B cell (primary cell): ENCODE measurements at regions of chr12 and their contacts with region 1.

Region 1: GRCh38 chr12:89701606-89702206 is 6.9 kb downstream of the ATP2B1 start:
- DNase-seq: no peak
- ATAC-seq: no peak
- H3K4me3 ChIP-seq: no peak overlapping the region
- H3K4me3 Mint-ChIP-seq: peak overlapping the region; percentile 42
- H3K27ac ChIP-seq: no peak overlapping the region
- H3K27ac Mint-ChIP-seq: no peak overlapping the region
- H3K4me1 ChIP-seq: peaks cover 37 to 81% of the 10 kb centered on the region in 2 donors
- H3K4me1 Mint-ChIP-seq: peaks cover 91% of the 10 kb centered on the region
- H3K27me3 ChIP-seq: no peaks in the 10 kb centered on the region
- H3K27me3 Mint-ChIP-seq: no peaks in the 10 kb centered on the region
- CTCF ChIP-seq: no peak

Region 2: GRCh38 chr12:89514751-89515150 is 187.0 kb before region 1 on chr12:
- CTCF ChIA-PET with region 1: no interaction called
- POLR2A ChIA-PET with region 1: no interaction called
- intact Hi-C with region 1: no loop called
- DNase-seq: no peak
- ATAC-seq: no peak
- H3K4me3 ChIP-seq: no peak overlapping the region
- H3K4me3 Mint-ChIP-seq: no peak overlapping the region
- H3K27ac ChIP-seq: no peak overlapping the region
- H3K27ac Mint-ChIP-seq: no peak overlapping the region
- H3K4me1 ChIP-seq: peaks cover 12 to 15% of the 10 kb centered on the region in 2 donors
- H3K4me1 Mint-ChIP-seq: peaks cover 17% of the 10 kb centered on the region
- H3K27me3 ChIP-seq: no peaks in the 10 kb centered on the region
- H3K27me3 Mint-ChIP-seq: no peaks in the 10 kb centered on the region
- CTCF ChIP-seq: no peak

Region 3: DNA sequence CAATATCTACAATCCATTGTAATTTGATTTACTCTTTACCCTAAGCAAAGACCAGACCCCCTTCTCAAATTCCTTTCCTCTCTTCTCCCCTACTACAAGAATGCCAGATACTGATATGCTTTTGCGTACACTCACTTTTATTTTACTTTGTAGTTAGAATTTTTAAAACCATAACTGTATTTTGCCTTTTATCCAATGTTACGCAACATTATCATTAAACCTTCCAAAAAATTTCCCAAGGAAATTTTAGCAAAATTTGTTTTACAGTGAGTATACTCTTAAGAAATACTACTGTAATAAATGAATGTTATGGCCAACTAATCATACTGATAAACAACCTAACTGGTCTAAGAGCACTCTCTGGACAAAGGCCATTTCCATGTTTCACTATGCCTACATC is 15.4 kb before region 1 on chr12:
- CTCF ChIA-PET with region 1: no interaction called
- POLR2A ChIA-PET with region 1: no interaction called
- intact Hi-C with region 1: loop called (anchors 2 kb)
- DNase-seq: no peak
- ATAC-seq: no peak
- H3K4me3 ChIP-seq: no peak overlapping the region
- H3K4me3 Mint-ChIP-seq: no peak overlapping the region
- H3K27ac ChIP-seq: no peak overlapping the region
- H3K27ac Mint-ChIP-seq: no peak overlapping the region
- H3K4me1 ChIP-seq: peaks cover 6 to 35% of the 10 kb centered on the region in 2 donors
- H3K4me1 Mint-ChIP-seq: peaks cover 62% of the 10 kb centered on the region
- H3K27me3 ChIP-seq: no peaks in the 10 kb centered on the region
- H3K27me3 Mint-ChIP-seq: no peaks in the 10 kb centered on the region
- CTCF ChIP-seq: no peak

Region 4: DNA sequence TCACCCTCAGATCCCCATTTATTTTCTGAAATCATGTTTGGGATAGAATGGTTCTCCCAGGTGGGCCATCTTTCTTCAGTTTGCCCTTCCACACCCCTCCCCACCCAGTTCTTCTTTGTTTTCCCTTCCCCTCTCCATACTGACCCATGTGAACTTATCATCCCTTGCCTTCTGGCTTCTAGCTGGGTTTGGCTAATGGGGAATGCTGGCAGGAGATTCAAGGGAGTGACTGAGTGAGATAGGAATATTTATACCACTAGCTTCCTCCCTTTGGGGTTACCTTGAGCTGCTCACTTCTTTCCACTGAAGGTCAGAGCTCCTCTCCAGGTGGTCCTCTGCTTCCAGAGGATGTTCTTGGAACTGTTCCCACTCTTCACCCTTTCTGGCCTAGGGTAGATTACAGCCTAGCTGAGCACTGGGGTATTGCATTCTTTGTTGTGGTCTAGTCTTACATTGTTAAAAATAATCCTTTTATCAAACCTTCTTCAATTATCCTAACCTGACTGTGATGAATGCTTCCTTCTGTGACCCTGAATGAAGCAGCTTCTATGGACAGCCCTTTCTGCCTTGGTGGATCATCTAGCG is 95.2 kb after region 1 on chr12:
- CTCF ChIA-PET with region 1: no interaction called
- POLR2A ChIA-PET with region 1: no interaction called
- intact Hi-C with region 1: no loop called
- DNase-seq: no peak
- ATAC-seq: no peak
- H3K4me3 ChIP-seq: no peak overlapping the region
- H3K4me3 Mint-ChIP-seq: no peak overlapping the region
- H3K27ac ChIP-seq: no peak overlapping the region
- H3K27ac Mint-ChIP-seq: no peak overlapping the region
- H3K4me1 ChIP-seq: peaks cover 14 to 22% of the 10 kb centered on the region in 2 donors
- H3K4me1 Mint-ChIP-seq: peaks cover 22% of the 10 kb centered on the region
- H3K27me3 ChIP-seq: no peaks in the 10 kb centered on the region
- H3K27me3 Mint-ChIP-seq: no peaks in the 10 kb centered on the region
- CTCF ChIP-seq: no peak